ENCODE measurements at regions of chr2 and their contacts with region 1.

Region 1: DNA sequence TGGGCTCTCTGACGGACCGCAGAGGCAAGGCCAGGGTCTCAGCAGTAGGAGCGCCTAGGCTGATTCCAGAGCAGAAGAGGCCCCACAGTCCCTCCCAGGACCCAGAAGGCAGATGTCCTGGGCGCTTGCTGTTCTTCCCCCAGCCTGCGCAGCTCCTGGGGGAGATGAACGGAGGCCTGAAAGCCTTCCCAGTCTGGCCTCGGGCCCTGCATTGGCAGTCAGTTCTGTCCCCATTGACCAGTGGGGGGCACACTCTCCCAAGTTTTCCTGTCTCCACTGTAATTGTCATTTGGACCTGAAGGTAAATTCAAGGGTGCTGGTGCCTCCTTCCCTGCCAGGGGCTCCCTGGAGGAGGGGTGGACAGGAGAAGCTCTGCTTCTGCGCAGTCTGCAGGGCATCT is 345.7 kb downstream of the CYP26B1 start:
- DNase-seq: peak; percentile 69
- H3K4me3 ChIP-seq: no peak overlapping the region
- H3K27ac ChIP-seq: no peak overlapping the region
- H3K4me1 ChIP-seq: peaks cover 17% of the 10 kb centered on the region
- H3K27me3 ChIP-seq: peaks cover 8% of the 10 kb centered on the region
- CTCF ChIP-seq: peak; percentile 72

Region 2: DNA sequence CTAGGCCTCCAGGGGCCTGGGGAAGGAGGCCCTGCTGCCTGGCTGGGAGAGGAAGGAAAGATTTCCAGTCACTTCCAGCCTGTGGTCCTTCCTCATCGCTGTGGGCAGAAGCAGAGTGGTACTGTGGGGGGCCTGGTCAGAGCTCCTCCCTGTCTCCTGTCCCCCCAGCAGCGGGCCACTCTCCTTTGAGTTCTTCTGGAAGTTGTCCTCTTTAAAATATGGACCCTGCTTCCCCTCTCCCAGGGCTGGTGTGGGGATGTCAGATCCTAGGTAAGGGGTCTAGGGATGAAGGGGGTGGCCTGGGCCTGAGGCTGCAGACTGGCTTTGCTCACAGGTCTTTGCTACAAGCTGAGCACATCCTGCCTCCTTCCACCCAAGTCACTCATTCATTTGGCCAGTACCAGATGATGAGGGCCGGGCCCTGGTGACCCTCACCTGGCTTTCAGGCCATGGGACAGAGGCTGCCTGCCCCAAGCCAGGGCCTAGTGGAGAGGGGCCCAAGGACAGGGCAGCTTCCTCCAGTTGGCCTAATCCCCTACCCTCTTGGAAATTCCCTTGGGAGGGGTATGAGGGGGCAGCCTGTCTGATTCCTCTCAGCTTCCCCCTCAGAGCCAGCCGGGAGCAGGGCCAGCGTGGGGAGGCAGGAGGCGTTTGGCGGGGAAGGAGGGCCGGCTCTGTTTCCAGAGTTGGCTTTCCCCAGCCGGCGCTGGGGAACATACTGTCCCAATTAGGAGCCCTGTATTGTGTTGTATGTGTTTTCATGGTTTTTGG is 116.7 kb before region 1 on chr2:
- intact Hi-C with region 1: loop called (anchors 10 kb)
- DNase-seq: no peak
- H3K4me3 ChIP-seq: no peak overlapping the region
- H3K27ac ChIP-seq: no peak overlapping the region
- H3K4me1 ChIP-seq: peaks cover 13% of the 10 kb centered on the region
- H3K27me3 ChIP-seq: no peaks in the 10 kb centered on the region
- CTCF ChIP-seq: no peak

Region 3: DNA sequence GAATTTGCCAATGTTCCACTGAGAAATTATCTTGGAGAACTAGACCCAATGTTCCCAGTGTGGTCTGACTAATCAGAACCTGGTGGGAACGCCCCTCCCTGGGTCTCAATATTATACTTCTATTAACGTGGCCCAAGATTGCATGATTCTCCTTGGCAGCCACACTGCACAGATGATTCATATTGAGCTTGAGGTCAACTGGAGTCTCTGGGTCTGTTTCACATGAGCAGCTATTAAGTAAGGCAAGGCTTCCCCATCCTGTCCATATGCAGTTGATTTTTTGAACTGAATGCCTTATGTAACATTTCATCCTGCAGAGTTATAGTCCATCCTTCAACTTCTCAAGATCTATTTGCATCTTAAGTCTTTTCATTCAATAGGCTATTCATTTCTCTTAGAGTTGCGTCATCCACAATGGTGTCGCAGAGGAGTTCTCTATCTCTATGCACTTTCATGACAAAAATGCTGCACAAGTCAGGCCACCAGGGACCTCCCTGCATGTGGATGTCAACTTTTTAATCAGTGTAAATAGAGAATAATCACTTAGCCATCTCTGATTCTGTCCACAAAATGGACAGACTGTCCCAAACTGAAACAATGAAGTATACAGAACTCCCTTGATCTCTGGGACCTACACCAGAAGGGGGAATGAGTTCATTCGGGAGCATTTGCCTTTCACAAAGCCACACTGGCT is 88.2 kb after region 1 on chr2:
- intact Hi-C with region 1: no loop called
- DNase-seq: no peak
- H3K4me3 ChIP-seq: no peak overlapping the region
- H3K27ac ChIP-seq: peak overlapping the region; percentile 27
- H3K4me1 ChIP-seq: peaks cover 3% of the 10 kb centered on the region
- H3K27me3 ChIP-seq: no peaks in the 10 kb centered on the region
- CTCF ChIP-seq: no peak

Measured in left ventricle myocardium inferior (tissue), 1 donor.